ENCODE measurements at regions of chr3 and their contacts with region 1.

Region 1: DNA sequence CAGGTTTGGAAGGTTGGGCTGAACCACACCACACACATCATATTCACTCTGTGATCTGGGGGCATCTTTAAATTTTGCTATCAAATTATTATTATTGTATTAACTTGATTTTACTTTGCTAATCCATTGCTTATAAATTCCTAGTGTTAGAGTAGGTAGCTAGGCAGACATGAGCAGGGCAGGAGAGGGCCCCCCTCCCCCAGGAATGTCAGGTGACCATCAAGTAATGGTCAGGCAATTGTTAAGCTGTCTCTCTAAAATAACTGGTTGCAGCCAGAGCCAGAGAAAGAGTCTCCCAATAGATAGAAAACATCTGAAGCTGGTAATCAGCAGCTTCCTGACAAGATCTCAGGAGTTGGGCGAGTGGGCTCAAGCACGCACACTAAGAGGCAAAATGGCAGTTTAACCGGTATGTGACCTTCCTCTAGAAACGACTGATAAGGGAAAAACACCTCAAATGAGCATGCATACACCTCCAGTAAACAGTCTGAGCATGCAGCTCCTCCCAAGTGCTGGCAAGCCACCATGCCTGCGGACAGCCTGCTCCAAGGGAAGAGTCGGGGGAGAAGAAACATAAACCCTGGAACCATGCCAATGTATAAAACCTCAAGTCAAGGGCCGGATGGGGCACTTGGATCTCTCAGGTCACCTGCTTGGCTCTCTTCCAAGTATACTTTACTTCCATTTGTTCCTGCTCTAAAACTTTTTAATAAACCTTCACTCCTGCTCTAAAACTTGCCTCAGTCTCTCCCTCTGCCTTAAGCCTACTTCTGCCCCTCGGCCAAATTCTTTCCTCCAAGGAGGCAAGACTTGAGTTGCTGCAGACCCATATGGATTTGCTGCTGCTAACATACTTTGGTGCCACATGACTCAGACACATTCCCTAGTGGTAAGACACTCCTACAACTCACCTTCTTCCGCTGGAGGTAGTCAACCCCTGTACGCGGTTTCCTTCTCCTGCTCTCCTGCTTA is 3.0 kb upstream of the CXCR6 start:
- DNase-seq: peak in 1 of 2 donors; percentile 34
- H3K4me3 ChIP-seq: no peak overlapping the region
- H3K27ac ChIP-seq: no peak overlapping the region
- H3K4me1 ChIP-seq: peaks cover 0 to 12% (median 4%) of the 10 kb centered on the region in 4 donors
- H3K27me3 ChIP-seq: no peaks in the 10 kb centered on the region
- CTCF ChIP-seq: no peak

Region 2: GRCh38 chr3:45807681-45808540 is 132.4 kb before region 1 on chr3:
- intact Hi-C with region 1: no loop called
- DNase-seq: no peak
- H3K4me3 ChIP-seq: no peak overlapping the region
- H3K27ac ChIP-seq: no peak overlapping the region
- H3K4me1 ChIP-seq: no peaks in the 10 kb centered on the region
- H3K27me3 ChIP-seq: no peaks in the 10 kb centered on the region
- CTCF ChIP-seq: no peak

Region 3: DNA sequence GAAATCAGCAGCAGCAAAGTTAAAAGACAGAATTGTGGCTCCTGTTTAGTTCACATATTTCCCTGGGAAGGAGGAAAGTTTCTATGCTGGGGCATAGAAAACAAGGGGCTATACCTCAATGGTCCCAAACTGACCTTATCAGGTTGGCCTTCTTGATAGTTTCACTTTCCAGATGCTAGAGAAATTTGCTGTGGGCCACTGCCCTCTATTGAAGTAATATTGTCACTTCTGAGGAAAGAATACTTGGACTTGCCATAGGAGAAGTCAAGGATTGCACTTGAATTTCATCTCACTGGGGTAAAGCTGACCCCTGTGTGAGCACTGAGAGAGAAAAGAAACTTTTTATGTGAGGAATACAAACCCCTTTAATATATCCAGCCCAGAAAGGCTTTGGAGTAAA is 136.3 kb after region 1 on chr3:
- intact Hi-C with region 1: loop called (anchors 2 kb)
- DNase-seq: no peak
- H3K4me3 ChIP-seq: no peak overlapping the region
- H3K27ac ChIP-seq: no peak overlapping the region
- H3K4me1 ChIP-seq: no peaks in the 10 kb centered on the region
- H3K27me3 ChIP-seq: no peaks in the 10 kb centered on the region
- CTCF ChIP-seq: no peak

Measured in tibial artery (tissue), 4 donors.